ENCODE measurements at regions of chr15 and their contacts with region 1.

Region 1: DNA sequence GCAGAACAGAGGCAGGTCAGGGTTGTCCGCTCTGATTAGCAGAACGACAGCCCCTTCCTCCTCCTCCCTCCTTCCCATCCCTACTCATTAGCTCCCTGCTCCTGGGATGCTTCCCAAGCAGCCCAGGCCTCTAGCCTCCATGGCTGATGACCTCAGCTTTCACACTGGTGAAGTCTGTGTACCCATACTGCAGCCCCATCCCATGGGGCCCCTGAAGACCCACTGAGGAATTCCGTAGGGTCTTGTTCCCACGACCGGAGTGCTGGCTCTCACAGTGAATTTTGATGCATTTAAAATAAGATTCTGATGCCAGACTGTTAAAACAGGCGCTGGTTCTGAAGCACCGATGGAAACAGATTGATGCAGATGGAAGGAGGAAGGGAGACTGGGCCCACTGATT is 36.1 kb downstream of the GOLGA6A start:
- DNase-seq: no peak
- H3K4me3 ChIP-seq: no peak overlapping the region
- CTCF ChIP-seq: no peak

Region 2: DNA sequence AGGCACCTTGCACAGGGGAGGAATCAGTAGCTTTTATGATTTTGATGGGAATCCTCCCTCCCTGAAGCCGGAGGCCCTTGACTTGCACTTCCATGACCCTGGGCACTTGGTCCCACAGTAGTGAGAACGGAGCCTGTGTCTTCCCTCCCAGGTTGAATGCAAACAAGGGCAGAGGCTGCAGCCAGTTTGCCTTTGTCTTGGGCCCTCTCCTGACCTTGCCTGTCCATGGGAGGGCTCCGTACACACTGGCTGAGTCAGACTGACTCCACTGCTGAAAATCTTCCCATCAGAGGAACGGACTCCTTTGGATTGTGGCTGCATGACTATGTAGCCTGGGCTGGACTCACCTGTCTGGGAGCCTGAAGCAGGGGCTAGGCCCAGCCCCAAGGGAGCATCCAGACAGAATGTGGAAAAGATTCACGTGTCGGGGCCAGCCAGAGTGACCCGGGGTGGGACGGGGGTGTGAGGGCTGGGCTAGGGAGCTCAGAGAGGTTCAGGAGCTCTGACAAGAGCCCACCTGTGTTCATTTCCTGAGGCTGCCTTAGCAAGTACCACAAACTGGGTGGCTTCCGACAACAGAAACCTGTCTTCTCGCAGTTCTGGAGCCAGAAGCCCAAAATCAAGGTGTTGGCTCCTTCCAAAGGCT is 163.4 kb before region 1 on chr15:
- CTCF ChIA-PET with region 1: no interaction called
- POLR2A ChIA-PET with region 1: no interaction called
- DNase-seq: no peak
- H3K4me3 ChIP-seq: no peak overlapping the region
- CTCF ChIP-seq: no peak

Region 3: GRCh38 chr15:73982222-73982962 is 63.9 kb before region 1 on chr15:
- CTCF ChIA-PET with region 1: interaction called, 544 read pairs
- POLR2A ChIA-PET with region 1: no interaction called
- DNase-seq: peak; percentile 81
- H3K4me3 ChIP-seq: peak overlapping the region; percentile 20
- CTCF ChIP-seq: no peak

Region 4: DNA sequence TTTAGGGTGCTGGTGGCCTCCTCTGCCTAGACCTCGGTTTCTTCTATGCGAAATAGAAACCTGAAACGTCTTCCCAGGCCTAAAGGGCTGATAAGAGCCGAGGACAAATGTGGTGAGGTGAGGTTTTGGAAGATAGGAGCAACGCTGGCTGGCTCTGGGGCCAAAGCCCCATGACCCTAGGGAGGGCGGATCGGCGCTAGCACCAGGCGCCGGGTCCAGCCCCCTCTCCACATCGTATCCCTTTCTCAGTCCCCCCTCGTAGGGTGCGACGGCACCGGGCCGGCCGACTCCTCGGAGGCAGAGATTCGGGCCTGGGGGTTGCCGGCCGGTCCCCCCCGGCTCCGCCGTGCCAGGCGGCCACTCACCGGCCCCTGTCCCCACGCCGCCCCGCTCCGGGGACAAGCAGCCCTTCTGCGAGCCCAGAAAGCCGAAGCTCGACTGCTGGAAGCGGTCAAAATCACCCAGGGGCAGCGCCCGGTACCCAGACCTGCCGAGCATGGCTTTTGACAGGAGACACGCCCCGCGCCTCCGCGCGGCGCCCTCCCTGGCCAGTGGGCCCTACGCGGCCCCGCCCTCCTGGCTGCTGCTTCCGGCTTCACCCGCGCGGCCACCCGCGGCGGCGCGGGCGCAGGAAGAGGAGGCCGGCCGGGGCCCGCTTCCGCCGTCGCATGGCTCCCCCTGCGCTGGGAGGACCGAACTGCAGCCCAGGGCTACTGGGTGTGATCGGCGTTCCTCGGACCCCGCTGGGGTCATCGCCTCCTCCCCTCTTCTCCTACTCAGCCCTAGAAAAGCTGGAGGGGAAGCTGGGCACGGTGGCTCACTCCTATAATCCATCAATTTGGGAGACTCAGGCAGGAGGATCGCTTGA is 54.3 kb before region 1 on chr15 and contains the start of gene STOML1:
- CTCF ChIA-PET with region 1: interaction called, 126 read pairs
- POLR2A ChIA-PET with region 1: interaction called, 3 read pairs
- DNase-seq: no peak
- H3K4me3 ChIP-seq: peak within 1 kb of the TSS; percentile 71
- CTCF ChIP-seq: peak; percentile 85

Region 5: GRCh38 chr15:74025436-74025835 is 20.8 kb before region 1 on chr15:
- CTCF ChIA-PET with region 1: interaction called, 87 read pairs
- POLR2A ChIA-PET with region 1: no interaction called
- DNase-seq: no peak
- H3K4me3 ChIP-seq: no peak overlapping the region
- CTCF ChIP-seq: no peak